Activated CD4-positive, alpha-beta T cell treated with anti-CD3 and anti-CD28 coated beads for 36 hours (primary cell): ENCODE measurements at regions of chr7 and their contacts with region 1.

Region 1: GRCh38 chr7:152424348-152425108 is 11.3 kb downstream of the KMT2C start:
- DNase-seq: peak; percentile 49
- ATAC-seq: peak; percentile 90
- H3K4me3 Mint-ChIP-seq: no peak overlapping the region
- H3K27ac Mint-ChIP-seq: peak overlapping the region; percentile 76
- H3K4me1 Mint-ChIP-seq: peaks cover 67% of the 10 kb centered on the region
- H3K27me3 Mint-ChIP-seq: no peaks in the 10 kb centered on the region

Region 2: DNA sequence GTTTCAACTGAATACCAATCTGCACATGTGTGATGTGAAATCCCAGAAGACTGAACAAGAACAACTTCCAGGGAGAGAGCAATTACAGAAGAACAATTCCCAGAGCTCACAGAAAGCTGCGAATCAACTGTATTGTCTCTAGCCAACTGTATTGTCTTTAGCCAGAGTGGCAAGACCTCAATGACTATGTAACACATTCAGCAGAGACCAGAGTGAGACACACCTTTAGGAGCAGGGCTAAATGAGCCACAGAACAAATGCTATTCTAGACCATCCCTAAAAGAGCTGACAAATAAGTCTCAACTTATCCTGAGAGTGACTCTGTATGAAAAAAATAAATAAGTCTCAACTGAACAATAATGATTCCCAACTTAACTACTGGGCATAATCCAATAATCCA is 60.7 kb before region 1 on chr7:
- CTCF ChIA-PET with region 1: no interaction called
- POLR2A ChIA-PET with region 1: no interaction called
- intact Hi-C with region 1: loop called in 1 of 2 experiments (anchors 5 kb)
- DNase-seq: no peak
- ATAC-seq: no peak
- H3K4me3 Mint-ChIP-seq: no peak overlapping the region
- H3K27ac Mint-ChIP-seq: no peak overlapping the region
- H3K4me1 Mint-ChIP-seq: peaks cover 46% of the 10 kb centered on the region
- H3K27me3 Mint-ChIP-seq: no peaks in the 10 kb centered on the region

Region 3: DNA sequence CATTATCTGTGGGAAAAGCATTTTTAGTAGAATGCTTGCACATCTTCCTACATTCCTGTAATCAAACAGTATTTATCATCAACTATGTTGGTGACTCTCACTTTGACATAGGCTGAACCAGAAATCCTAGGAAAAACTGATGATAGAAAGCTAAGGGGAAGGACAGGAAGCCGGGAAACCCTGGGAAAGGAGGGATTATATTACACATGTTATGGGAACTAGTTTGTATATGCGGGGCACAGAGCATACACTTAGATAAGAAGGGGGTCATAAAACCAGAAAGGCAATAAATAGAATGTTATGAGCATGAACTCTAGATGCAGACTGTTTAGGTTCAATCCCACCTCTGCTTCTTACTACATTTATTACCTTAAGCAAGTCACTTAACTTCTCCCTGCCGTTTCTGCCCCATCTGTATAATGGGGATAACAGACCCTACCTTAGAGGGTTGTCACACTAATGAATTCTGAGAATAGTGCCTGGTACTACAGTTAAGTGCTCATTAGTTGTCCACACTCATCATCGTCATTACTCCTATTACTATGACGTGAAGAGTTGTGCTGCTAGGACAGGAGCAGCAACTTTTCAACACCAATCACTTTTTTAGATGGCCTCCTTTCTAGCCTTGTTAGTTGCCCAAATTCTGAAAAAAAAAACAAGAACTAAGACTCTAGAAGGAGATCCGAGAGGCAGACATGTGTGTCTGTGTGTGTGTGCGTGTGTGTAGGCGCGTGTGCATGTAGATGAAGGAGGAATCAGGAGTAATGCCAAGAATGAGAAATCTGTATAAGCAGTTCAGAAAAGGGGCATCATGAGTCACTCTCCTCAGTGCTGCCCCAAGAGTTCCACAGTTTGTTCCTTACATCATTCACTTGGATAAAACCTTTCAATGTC is 40.9 kb before region 1 on chr7:
- CTCF ChIA-PET with region 1: no interaction called
- POLR2A ChIA-PET with region 1: no interaction called
- intact Hi-C with region 1: loop called (anchors 5 kb)
- DNase-seq: peak; percentile 22
- ATAC-seq: peak; percentile 63
- H3K4me3 Mint-ChIP-seq: no peak overlapping the region
- H3K27ac Mint-ChIP-seq: no peak overlapping the region
- H3K4me1 Mint-ChIP-seq: peaks cover 26% of the 10 kb centered on the region
- H3K27me3 Mint-ChIP-seq: no peaks in the 10 kb centered on the region

Region 4: DNA sequence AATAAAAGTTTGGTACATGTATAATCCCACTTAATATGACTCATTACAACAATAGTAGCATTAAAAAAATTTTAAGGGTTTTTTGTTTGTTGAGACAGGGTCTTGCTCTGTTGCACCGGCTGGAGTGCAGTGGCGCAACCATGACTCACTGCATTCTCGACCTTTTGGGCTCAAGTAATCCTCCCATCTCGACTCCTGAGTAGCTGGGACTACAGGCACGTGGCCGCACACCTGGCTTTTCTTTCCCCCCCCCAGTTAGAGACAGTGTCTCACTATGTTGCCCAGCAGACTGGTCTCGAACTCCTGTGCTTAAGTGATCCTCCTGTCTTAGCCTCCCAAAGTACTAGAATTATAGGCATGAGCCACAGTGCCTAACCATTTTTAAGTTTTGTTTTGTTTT is 29.4 kb before region 1 on chr7:
- CTCF ChIA-PET with region 1: no interaction called
- POLR2A ChIA-PET with region 1: no interaction called
- intact Hi-C with region 1: loop called in 1 of 2 experiments (anchors 1 kb)
- DNase-seq: no peak
- ATAC-seq: no peak
- H3K4me3 Mint-ChIP-seq: no peak overlapping the region
- H3K27ac Mint-ChIP-seq: no peak overlapping the region
- H3K4me1 Mint-ChIP-seq: peaks cover 59% of the 10 kb centered on the region
- H3K27me3 Mint-ChIP-seq: no peaks in the 10 kb centered on the region